ENCODE measurements at regions of chr9 and their contacts with region 1.

Region 1: DNA sequence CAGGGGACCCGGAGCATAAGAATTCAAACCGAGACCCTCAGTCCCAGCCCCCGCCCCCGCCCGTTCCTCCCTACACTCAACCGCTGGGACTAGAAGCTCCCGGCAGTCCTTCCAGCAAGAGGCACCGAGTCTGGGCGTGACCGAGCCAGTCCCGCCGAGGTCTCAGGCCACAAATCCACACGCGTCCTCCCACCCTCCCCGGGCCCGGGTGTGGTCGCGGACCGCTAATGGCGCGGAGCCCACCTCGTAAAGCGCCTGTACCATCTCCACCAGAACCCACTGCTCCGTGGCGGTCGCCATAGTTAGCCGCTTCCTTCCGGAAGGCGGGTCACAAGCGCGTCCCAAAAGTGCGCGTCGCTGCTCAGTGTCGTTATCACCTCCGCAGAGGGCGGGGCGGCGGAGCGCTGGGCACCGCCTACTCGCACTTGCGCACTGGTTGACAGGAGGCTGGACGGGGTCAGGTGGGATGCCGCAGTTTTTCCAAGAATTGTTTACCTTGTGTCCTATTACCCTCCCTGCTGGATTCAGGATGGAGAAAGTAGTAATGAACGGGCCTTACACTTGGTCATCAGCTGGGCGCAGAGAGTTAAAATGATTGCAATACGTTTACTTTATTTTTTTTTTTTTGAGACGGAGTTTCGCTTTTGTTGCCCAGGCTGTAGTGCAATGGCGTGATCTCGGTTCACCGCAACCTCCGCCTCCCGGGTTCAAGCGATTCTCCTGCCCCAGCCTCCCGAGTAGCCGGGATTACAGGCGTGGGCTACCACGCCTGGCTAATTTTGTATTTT is at the start of gene SPTLC1:
- DNase-seq: peak; percentile 97
- ATAC-seq: peak; percentile 98
- H3K4me3 ChIP-seq: peak within 1 kb of the TSS; percentile 63 to 91 (median 83)
- H3K4me3 Mint-ChIP-seq: peak within 1 kb of the TSS; percentile 99
- H3K27ac ChIP-seq: peak within 1 kb of the TSS; percentile 81 to 96
- H3K27ac Mint-ChIP-seq: peak within 1 kb of the TSS; percentile 99
- H3K4me1 ChIP-seq: peaks cover 15 to 16% of the 10 kb centered on the region in 2 donors
- H3K4me1 Mint-ChIP-seq: peaks cover 29% of the 10 kb centered on the region
- H3K27me3 ChIP-seq: no peaks in the 10 kb centered on the region
- H3K27me3 Mint-ChIP-seq: no peaks in the 10 kb centered on the region
- CTCF ChIP-seq: no peak
- total RNA-seq, gene SPTLC1: 53.5 and 57.3 TPM in 2 replicates

Region 2: GRCh38 chr9:92293452-92294296 is 178.4 kb after region 1 on chr9 and contains the start of gene IARS1:
- CTCF ChIA-PET with region 1: no interaction called
- POLR2A ChIA-PET with region 1: no interaction called
- intact Hi-C with region 1: loop called (anchors 1 kb)
- DNase-seq: peak; percentile 99
- ATAC-seq: peak; percentile 96
- H3K4me3 ChIP-seq: peak within 1 kb of the TSS; percentile 74 to 92 (median 87)
- H3K4me3 Mint-ChIP-seq: peak within 1 kb of the TSS; percentile 96
- H3K27ac ChIP-seq: peak within 1 kb of the TSS; percentile 64 to 79
- H3K27ac Mint-ChIP-seq: peak within 1 kb of the TSS; percentile 98
- H3K4me1 ChIP-seq: peaks cover 31 to 32% of the 10 kb centered on the region in 2 donors
- H3K4me1 Mint-ChIP-seq: peaks cover 62% of the 10 kb centered on the region
- H3K27me3 ChIP-seq: no peaks in the 10 kb centered on the region
- H3K27me3 Mint-ChIP-seq: no peaks in the 10 kb centered on the region
- CTCF ChIP-seq: peak; percentile 19
- total RNA-seq, gene IARS1: 82.8 and 94.5 TPM in 2 replicates